Left cardiac atrium (tissue), 4 donors: ENCODE measurements at regions of chr7 and their contacts with region 1.

Region 1: DNA sequence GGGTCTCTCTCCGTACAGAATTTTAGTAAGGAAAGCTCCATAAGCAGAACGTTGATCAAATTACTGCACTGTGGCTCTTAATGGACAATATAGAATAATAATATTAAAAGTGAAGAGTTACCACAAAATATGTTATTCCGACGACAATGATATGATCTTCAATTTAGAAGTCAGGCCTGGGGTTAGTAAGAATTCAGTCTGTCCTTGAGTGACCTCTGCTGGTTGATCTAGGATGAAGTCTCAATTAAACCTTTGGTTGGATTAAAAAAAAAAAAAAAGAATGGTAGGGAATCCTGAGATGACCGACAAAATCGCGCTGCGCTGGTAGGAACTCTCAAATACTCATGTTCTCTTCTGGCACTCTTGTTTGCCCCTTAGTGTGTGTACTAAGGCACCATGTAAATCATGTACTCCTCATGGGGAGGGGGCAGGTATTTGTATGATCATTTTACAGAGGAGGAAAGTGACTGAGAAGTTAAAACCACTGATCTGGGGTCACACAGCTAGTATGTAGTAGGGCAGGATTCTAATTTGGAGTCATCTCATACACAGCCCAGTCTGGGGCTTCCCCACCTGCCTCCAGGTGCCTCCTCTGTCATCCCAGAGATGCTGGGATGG is 161.3 kb upstream of the NPVF start:
- DNase-seq: no peak
- ATAC-seq: peak; percentile 30 to 32

Region 2: DNA sequence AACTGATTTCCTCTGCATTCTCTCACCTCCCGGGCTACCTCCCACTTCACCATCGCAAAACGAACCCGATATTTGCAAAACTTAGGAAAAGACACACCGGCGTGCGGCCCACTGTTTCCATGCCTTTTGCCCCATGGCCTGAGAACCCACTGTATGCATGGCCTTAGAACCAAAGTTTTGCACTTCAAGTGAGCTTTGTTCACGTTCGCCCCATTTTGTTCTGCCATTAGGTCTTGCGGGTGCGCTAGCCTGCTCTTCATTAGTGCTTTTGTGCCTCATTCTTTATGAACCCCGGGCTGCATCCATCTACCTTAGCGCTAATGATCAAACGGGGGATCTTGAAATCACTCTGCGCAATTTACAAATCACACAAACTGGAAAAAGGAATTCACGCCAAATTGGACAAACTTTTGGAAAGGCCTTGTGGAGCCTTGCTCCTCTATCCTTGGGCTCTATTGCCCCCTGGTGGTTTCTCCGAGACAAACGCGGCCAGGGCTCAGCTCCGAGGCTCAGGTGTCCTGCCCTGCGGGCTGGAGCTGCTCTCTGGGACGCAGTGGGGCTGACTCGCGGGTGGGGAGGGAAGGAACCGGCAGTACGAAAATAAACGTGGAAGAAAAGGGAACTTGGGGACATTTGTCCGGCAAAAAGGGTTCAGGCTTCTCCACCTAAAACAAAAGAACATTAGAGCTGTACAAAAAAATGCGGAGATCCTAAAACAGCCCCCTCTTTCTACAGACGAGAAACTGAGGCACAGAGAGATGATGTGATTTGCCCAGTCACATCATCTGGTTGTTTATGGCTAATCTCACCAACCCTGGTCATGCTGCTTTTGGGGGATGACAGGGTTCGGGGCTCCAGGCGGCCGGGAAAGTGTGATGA is 462.0 kb after region 1 on chr7:
- intact Hi-C with region 1: loop called (anchors 2 to 5 kb)
- DNase-seq: peak; percentile 80
- ATAC-seq: peak; percentile 75 to 77